Mammary epithelial cell (primary cell): ENCODE measurements at regions of chr1 and their contacts with region 1.

Region 1: DNA sequence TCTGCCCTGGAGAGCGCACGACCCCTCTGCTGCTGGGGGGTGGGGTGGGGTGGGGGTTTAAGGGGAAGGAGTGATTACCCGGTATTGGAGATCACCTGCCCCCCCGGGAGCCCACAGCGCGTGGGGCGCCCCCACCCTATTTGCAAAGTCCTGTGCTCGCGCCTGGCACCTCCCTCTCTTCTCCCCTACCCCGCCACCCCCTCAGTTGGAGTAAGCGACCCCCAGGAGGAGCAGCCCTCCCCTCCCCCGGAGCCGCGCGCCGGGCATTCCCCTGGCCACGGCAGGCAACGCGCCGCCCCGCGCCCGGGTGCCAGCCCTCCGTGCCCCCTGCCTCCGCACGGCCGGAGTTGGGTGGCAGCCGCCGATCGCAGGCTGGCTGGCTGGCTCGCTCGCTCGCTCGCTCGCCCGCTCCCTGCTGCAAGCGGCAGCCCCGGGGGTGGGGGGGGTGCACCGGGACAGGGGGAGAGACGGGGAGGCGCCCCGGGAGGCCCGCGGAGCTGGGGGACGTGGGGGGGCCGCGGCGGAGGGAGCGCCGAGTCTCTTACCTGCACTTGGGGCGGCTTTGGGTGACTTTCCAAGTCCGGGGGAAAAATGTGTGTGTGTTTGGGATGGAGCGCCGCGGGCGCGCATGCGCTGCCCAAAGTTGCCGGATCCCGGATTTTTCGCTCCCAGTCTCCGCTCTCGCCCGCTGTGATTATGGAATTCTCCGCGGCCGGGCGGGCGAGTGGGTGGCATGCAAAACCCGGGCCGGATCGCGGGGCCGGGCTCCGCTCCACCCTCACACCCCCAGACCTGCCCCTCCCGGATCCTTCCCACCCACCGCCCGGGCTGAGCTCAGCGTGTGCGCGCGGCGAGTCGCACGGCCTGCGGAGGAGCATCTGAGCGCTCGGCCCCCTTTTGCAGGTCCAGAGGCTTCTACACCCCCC is at the start of gene CASZ1:
- DNase-seq: peak; percentile 92
- H3K4me3 ChIP-seq: peak within 1 kb of the TSS; percentile 64 to 87 (median 80)
- H3K27ac ChIP-seq: no peak within 1 kb of the TSS
- H3K4me1 ChIP-seq: peaks cover 10% of the 10 kb centered on the region
- H3K27me3 ChIP-seq: no peaks in the 10 kb centered on the region
- CTCF ChIP-seq: no peak
- total RNA-seq, gene CASZ1: 13.0 to 14.1 TPM

Region 2: GRCh38 chr1:10679496-10680220 is 116.6 kb before region 1 on chr1:
- CTCF ChIA-PET with region 1: no interaction called
- dilution Hi-C with region 1: no loop called
- in situ Hi-C with region 1: no loop called
- intact Hi-C with region 1: loop called (anchors 1 kb)
- DNase-seq: peak; percentile 67
- H3K4me3 ChIP-seq: no peak overlapping the region
- H3K27ac ChIP-seq: no peak overlapping the region
- H3K4me1 ChIP-seq: no peaks in the 10 kb centered on the region
- H3K27me3 ChIP-seq: no peaks in the 10 kb centered on the region
- CTCF ChIP-seq: no peak

Region 3: DNA sequence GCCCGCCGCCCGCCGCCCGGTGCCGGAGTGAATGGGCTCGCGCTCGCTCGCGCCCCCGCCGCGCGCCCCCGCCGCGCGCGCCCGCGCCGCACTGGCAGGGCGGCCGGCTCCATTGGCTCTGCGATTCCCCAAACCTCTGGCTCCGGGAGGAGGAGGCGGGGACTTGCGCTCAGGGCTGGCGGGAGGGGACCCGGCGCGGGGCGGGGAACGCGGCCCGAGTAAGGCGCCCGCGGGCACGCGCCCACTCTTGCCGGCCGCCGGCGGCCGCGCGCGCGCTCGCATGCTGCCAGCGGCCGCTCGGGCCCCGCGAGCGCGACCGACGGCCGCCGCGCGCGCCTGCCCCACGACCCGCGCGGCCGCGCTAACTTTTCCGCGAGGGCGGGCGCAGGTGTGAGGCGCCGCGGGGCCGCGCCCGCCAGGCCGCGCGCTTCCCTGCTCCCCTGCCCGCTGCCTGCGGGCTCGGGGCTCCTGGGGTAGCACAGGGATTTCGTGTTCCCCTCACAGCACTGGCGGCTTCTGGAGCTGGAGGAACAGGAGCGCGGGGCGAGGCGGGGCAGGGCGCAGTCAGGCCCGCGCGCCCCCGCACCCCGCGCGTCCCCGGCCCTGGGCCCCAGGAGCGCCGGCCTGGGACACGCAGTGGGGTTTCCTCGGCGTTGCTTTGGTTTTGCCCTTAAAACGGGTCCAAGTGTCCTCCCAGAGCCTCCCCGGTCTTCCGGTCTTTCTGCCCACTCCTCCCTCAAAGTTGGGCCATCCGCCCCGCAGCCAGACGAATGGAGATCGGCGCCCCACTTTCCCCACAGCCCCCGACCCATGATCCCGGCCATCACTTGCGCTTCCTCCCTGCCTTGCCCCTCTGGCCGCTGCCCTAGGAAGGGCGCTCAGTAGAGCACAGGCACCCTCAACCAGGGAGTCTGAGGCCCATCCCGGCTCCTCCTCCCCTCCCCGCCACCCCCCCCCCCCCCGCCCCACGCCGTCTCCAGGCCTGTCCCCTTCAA is 101.4 kb before region 1 on chr1:
- CTCF ChIA-PET with region 1: no interaction called
- dilution Hi-C with region 1: no loop called
- in situ Hi-C with region 1: no loop called
- intact Hi-C with region 1: loop called (anchors 5 kb)
- DNase-seq: peak; percentile 78
- H3K4me3 ChIP-seq: peak overlapping the region in 2 of 3 experiments; percentile 42 to 53
- H3K27ac ChIP-seq: no peak overlapping the region
- H3K4me1 ChIP-seq: peaks cover 16% of the 10 kb centered on the region
- H3K27me3 ChIP-seq: no peaks in the 10 kb centered on the region
- CTCF ChIP-seq: no peak

Region 4: GRCh38 chr1:10830961-10831669 is 34.8 kb after region 1 on chr1:
- CTCF ChIA-PET with region 1: no interaction called
- dilution Hi-C with region 1: no loop called
- in situ Hi-C with region 1: no loop called
- intact Hi-C with region 1: loop called (anchors 5 kb)
- DNase-seq: peak; percentile 65
- H3K4me3 ChIP-seq: no peak overlapping the region
- H3K27ac ChIP-seq: no peak overlapping the region
- H3K4me1 ChIP-seq: peaks cover 23% of the 10 kb centered on the region
- H3K27me3 ChIP-seq: no peaks in the 10 kb centered on the region
- CTCF ChIP-seq: no peak

Region 5: GRCh38 chr1:10986525-10986890 is 190.2 kb after region 1 on chr1:
- CTCF ChIA-PET with region 1: no interaction called
- dilution Hi-C with region 1: no loop called
- in situ Hi-C with region 1: no loop called
- intact Hi-C with region 1: no loop called
- DNase-seq: no peak
- H3K4me3 ChIP-seq: no peak overlapping the region
- H3K27ac ChIP-seq: no peak overlapping the region
- H3K4me1 ChIP-seq: no peaks in the 10 kb centered on the region
- H3K27me3 ChIP-seq: no peaks in the 10 kb centered on the region
- CTCF ChIP-seq: no peak